ENCODE measurements at regions of chr2 and their contacts with region 1.

Region 1: GRCh38 chr2:227238238-227239237 is 74.1 kb downstream of the COL4A3 start:
- DNase-seq: peak; percentile 40 to 92 (median 81)

Region 2: DNA sequence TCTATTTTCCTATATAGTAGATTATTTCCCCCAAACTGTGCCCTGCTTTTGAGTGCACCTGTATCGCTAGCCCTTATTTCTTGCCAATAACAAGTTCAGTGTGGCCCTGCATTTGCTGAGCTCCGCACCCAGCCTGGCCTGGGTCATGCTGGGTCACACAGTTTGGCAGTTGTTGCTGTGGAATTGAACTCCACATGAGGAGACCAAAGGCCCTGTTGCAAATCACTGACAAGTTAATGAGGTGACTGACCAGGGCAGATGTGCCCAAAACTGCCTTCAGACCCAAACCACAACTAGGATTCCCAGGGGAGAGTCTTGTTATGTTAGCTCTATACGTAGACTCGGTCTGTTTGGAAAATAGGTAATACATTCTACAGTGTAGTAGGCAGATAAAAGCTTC is 105.6 kb before region 1 on chr2:
- intact Hi-C with region 1: loop called (anchors 5 kb)
- DNase-seq: no peak

Measured in head of caudate nucleus (tissue), 42 donors.